PC-3 (cell line): ENCODE measurements at regions of chr14 and their contacts with region 1.

Region 1: DNA sequence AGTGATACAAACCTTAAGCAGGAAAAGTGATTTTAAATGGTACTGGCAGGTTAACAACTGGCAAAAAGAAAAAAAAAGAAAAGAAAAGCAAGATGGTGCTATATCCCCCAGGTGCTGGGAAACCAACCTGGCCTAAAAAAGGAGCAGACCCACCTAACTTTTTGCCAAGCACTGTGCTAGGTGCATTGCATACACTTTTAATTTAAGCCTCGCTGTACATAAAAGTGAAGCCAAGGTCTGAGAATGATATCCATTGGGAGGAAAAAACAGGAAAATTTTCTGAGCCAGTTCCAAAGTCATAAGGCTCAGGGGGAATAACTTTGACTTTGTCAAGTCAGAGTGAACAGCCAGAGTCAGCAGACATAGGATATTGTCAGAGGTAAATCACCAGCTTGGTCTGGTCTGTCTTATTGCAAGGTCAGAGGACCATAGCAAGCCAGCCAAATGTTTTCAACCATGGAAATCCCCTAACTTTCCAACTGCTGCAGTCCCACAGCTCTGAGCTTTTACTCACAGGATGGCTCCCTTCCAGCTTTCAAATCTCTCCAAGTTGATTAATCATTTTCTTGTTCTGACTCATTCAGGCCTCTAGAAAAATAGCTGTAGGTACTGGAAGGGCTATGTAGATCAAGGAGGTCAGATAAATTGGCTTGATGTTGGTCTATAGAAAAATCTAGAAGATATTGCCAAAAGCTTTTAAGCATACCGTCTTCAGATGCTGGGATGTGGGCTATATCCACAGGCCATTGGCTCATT is 412.9 kb downstream of the RAD51B start:
- DNase-seq: peak; percentile 99
- ATAC-seq: peak; percentile 87
- H3K4me3 ChIP-seq: peak overlapping the region; percentile 44
- H3K27ac ChIP-seq: peak overlapping the region; percentile 97
- H3K4me1 ChIP-seq: peaks cover 53% of the 10 kb centered on the region
- H3K27me3 ChIP-seq: no peaks in the 10 kb centered on the region
- CTCF ChIP-seq: no peak

Region 2: DNA sequence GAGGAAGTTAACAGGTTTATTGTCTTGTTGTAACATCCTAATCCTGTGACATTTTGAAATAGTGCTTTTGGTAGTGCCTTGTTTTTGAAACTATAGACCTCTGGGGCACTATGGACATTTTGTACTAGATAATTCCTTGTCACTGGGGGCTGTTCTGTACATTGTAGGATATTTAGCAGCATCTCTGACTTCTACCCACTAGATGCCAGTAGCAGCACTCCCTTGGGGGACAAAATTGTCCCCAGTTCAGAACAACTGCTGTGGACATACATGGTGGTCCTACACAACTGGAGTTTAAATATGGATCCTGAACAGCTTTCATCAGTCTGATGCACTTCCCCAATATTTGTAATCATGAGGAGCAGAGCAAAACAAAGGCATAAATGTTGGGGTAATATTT is 148.2 kb before region 1 on chr14:
- CTCF ChIA-PET with region 1: no interaction called
- POLR2A ChIA-PET with region 1: no interaction called
- intact Hi-C with region 1: loop called (anchors 5 kb)
- DNase-seq: peak; percentile 37
- ATAC-seq: peak; percentile 48
- H3K4me3 ChIP-seq: no peak overlapping the region
- H3K27ac ChIP-seq: no peak overlapping the region
- H3K4me1 ChIP-seq: no peaks in the 10 kb centered on the region
- H3K27me3 ChIP-seq: no peaks in the 10 kb centered on the region
- CTCF ChIP-seq: peak; percentile 71

Region 3: GRCh38 chr14:68164711-68165113 is 67.8 kb before region 1 on chr14:
- CTCF ChIA-PET with region 1: no interaction called
- POLR2A ChIA-PET with region 1: no interaction called
- intact Hi-C with region 1: loop called (anchors 2 kb)
- DNase-seq: peak; percentile 54
- ATAC-seq: peak; percentile 75
- H3K4me3 ChIP-seq: no peak overlapping the region
- H3K27ac ChIP-seq: peak overlapping the region; percentile 72
- H3K4me1 ChIP-seq: peaks cover 21% of the 10 kb centered on the region
- H3K27me3 ChIP-seq: no peaks in the 10 kb centered on the region
- CTCF ChIP-seq: no peak

Region 4: DNA sequence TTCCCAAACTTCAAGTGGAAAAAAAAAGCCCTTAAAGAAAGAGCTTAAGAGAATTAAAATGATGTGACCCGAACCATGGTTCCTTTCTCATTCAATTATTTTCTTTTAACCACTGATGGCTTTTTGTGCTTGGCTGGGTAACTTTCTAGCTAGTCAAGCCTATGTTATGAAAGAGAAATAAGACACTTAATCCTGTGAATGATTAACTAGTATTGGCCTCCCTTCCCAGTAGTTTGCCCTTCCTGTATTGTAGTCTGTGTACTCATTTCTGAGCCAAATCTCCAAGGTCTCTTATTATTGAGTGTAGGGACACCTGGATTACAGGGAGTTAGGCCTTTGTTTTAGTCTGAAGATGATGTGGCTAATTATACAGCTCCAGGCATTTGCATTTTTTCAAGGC is 59.9 kb before region 1 on chr14:
- CTCF ChIA-PET with region 1: no interaction called
- POLR2A ChIA-PET with region 1: interaction called, 10 read pairs
- intact Hi-C with region 1: loop called (anchors 2 kb)
- DNase-seq: peak; percentile 83
- ATAC-seq: peak; percentile 91
- H3K4me3 ChIP-seq: no peak overlapping the region
- H3K27ac ChIP-seq: peak overlapping the region; percentile 69
- H3K4me1 ChIP-seq: peaks cover 49% of the 10 kb centered on the region
- H3K27me3 ChIP-seq: no peaks in the 10 kb centered on the region
- CTCF ChIP-seq: no peak

Region 5: DNA sequence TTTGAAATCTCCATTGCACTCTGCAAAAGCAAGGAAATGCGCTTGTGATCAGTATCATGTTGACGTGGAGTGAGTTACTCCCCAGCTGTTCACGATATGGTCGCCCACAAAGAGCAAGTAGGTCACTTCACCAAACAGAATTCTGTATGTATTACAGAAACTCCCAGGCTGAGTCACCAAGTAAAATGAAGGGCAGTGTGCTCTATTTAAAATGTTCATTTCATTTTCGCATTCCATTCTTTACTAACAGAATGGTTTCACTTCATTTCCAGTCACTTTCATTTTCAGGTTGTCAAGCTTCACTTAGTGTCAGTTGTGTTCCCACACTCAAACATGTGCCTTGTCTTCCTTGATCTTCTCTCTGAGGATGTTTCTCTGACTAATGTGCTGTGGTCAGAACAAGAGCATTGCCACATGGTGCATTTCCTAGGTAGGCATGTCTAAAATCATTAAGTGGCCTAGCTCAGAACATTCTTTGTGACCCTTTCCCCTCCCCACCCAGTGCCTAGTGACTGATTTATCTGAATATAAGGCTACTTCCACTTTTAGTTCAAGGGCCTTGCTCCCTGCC is 21.7 kb before region 1 on chr14:
- CTCF ChIA-PET with region 1: no interaction called
- POLR2A ChIA-PET with region 1: interaction called, 4 read pairs
- intact Hi-C with region 1: loop called (anchors 1 kb)
- DNase-seq: peak; percentile 78
- ATAC-seq: peak; percentile 96
- H3K4me3 ChIP-seq: peak overlapping the region; percentile 41
- H3K27ac ChIP-seq: peak overlapping the region; percentile 83
- H3K4me1 ChIP-seq: peaks cover 28% of the 10 kb centered on the region
- H3K27me3 ChIP-seq: no peaks in the 10 kb centered on the region
- CTCF ChIP-seq: no peak